ENCODE measurements at regions of chr11 and their contacts with region 1.

Region 1: GRCh38 chr11:19903620-19904069 is 191.0 kb downstream of the NAV2 start:
- DNase-seq: peak; percentile 81
- H3K4me3 Mint-ChIP-seq: no peak overlapping the region
- H3K27ac Mint-ChIP-seq: no peak overlapping the region
- H3K4me1 Mint-ChIP-seq: peaks cover 9% of the 10 kb centered on the region
- H3K27me3 Mint-ChIP-seq: no peaks in the 10 kb centered on the region
- CTCF ChIP-seq: peak; percentile 68

Region 2: DNA sequence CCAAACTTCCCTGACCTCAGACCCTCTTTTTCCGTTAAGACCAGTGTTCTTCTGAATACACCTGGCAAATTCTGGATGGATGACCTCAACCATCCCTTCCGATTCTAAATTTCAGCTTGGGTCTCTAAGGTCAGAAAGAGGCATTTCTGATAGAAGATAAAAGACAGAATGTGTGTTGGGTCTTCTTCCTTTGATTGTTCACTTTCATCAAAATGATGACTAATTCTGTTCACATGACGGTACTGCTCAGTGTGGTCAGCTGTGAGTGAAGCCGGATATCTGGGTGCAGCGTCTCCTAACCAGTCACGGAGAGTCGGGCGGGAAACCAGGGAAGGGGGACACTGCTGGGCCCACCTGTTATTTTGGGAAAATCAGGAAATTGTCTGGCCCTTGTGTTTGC is 342.6 kb before region 1 on chr11:
- CTCF ChIA-PET with region 1: interaction called, 11 read pairs
- intact Hi-C with region 1: loop called (anchors 1 kb)
- DNase-seq: no peak
- H3K4me3 Mint-ChIP-seq: no peak overlapping the region
- H3K27ac Mint-ChIP-seq: no peak overlapping the region
- H3K4me1 Mint-ChIP-seq: peaks cover 8% of the 10 kb centered on the region
- H3K27me3 Mint-ChIP-seq: peaks cover 43% of the 10 kb centered on the region
- CTCF ChIP-seq: no peak

Region 3: GRCh38 chr11:19800162-19800561 is 103.5 kb before region 1 on chr11:
- CTCF ChIA-PET with region 1: no interaction called
- intact Hi-C with region 1: loop called (anchors 1 kb)
- DNase-seq: no peak
- H3K4me3 Mint-ChIP-seq: no peak overlapping the region
- H3K27ac Mint-ChIP-seq: peak overlapping the region; percentile 10
- H3K4me1 Mint-ChIP-seq: peaks cover 44% of the 10 kb centered on the region
- H3K27me3 Mint-ChIP-seq: no peaks in the 10 kb centered on the region
- CTCF ChIP-seq: no peak

Region 4: GRCh38 chr11:20337526-20338154 is 434.0 kb after region 1 on chr11:
- CTCF ChIA-PET with region 1: no interaction called
- intact Hi-C with region 1: loop called (anchors 5 kb)
- DNase-seq: peak; percentile 16
- H3K4me3 Mint-ChIP-seq: no peak overlapping the region
- H3K27ac Mint-ChIP-seq: no peak overlapping the region
- H3K4me1 Mint-ChIP-seq: no peaks in the 10 kb centered on the region
- H3K27me3 Mint-ChIP-seq: peaks cover 72% of the 10 kb centered on the region
- CTCF ChIP-seq: peak; percentile 12

Measured in Calu3 (cell line).